ENCODE measurements at regions of chr14 and their contacts with region 1.

Region 1: DNA sequence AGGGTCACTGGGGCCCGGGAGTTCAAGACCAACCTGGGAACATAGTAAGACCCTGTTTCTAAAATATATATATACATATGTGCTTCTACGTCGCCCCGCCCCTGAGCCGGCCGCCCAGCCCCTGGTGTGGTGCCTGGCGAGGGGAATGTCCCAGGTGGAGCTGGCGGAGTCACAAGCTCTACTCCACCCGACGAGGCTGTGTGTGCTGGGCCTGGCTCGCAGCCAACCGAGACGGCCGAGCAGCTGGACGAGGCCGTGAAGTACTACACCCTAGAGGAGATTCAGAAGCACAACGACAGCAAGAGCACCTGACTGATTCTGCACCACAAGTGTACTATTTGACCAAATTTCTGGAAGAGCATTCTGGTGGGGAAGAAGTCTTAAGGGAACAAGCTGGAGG is 22.1 kb upstream of the ITPK1 start:
- DNase-seq: no peak
- H3K4me3 ChIP-seq: no peak overlapping the region
- H3K27ac ChIP-seq: no peak overlapping the region
- H3K4me1 ChIP-seq: no peaks in the 10 kb centered on the region
- H3K27me3 ChIP-seq: no peaks in the 10 kb centered on the region
- CTCF ChIP-seq: no peak

Region 2: DNA sequence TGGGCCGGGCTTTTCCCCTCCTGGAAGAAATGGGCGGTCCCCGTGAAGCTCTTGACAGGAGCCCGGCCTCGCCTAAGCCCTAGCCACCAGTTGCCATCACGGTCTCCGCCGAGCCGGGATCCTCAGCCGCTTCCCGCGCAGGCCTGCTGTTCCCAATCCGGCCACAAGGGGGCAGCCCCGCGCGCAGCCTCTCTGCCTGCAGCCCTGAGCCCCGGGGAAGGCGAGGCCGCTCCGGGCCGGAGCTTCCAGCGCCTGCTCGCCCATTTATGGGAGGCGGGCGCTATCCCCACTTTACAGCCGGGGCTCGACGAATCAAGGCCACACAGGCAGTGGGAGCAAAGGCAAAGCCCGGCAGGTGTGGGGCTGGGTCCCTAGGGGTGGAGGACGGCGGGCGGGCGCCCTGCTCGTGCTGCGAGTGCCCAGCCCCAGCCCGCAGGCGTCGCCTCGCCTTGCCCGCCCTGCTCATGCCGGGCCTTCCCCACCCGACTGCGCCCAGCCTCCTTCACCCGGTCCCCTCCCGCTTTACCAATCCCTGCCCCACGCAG is 450.9 kb before region 1 on chr14:
- intact Hi-C with region 1: no loop called
- DNase-seq: peak in 1 of 2 donors; percentile 86
- H3K4me3 ChIP-seq: peak overlapping the region; percentile 50 to 64
- H3K27ac ChIP-seq: no peak overlapping the region
- H3K4me1 ChIP-seq: peaks cover 4% of the 10 kb centered on the region in 2 donors
- H3K27me3 ChIP-seq: no peaks in the 10 kb centered on the region
- CTCF ChIP-seq: peak; percentile 98 to 100 (median 100)

Region 3: DNA sequence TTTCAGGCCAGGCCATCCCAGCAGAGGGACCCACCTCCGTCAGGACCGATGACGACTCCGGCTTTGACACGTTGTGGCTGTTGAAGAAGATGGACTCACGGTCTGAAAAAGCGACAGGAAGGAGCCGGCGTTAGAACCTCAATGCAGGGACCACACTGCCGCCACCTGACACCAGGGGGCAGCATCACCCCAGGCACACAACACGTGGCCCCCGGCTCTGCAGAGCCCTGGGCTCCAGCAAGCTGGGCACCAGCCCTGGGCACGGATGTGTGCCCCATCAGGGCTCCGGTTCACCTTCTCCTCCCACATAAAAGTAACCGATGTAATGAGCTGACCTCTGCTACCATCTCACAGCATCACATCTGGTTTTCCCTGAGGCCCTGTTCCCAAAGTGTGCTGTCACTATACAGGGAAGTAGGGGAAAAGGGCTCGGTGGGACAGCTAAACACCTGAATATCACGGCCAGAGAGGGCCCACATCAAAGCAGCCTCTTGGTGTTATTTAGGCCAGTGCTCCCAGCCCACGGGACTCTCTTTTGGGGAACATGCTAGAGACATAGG is 185.9 kb before region 1 on chr14:
- intact Hi-C with region 1: loop called (anchors 1 kb)
- DNase-seq: peak in 1 of 2 donors; percentile 86
- H3K4me3 ChIP-seq: peak overlapping the region in 1 of 2 donors; percentile 33
- H3K27ac ChIP-seq: peak overlapping the region; percentile 51 to 79
- H3K4me1 ChIP-seq: peaks cover 0 to 25% of the 10 kb centered on the region in 2 donors
- H3K27me3 ChIP-seq: no peaks in the 10 kb centered on the region
- CTCF ChIP-seq: peak; percentile 93 to 97 (median 96)

Region 4: GRCh38 chr14:92973261-92973797 is 164.5 kb before region 1 on chr14:
- intact Hi-C with region 1: loop called (anchors 1 kb)
- DNase-seq: peak in 1 of 2 donors; percentile 87
- H3K4me3 ChIP-seq: no peak overlapping the region
- H3K27ac ChIP-seq: no peak overlapping the region
- H3K4me1 ChIP-seq: peaks cover 0 to 8% of the 10 kb centered on the region in 2 donors
- H3K27me3 ChIP-seq: no peaks in the 10 kb centered on the region
- CTCF ChIP-seq: peak; percentile 66 to 69 (median 68)